PC-3 (cell line): ENCODE measurements at regions of chr3 and their contacts with region 1.

Region 1: DNA sequence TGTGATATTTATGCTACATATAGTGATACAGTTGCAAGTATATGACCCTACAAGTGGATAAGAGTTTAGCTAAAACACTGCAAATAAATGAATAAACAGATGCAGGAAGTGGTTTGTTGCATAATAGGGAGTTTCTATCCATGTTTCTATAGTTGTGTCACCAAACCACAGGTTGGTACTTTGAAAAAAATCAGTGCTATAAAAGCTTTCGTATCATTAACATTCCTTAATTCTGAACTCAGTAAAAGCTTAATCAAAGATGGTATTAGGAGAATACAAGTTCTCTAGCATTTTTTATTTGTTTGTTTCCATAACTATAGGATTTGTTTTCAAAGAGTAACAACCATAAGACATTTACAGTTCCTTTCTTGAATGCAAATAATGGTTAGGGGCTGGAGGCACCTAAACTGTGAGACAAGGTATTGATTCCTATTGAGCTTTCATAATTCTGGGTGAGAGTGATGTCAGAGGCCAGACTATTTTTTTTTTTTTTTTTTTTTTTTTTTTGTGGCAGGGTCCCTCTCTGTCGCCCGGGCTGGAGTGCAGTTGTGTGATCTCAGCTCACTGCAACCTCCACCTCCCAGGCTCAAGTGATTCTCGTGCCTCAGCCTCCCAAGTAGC is 29.6 kb downstream of the CPOX start:
- DNase-seq: peak; percentile 81
- ATAC-seq: peak; percentile 43
- H3K4me3 ChIP-seq: no peak overlapping the region
- H3K27ac ChIP-seq: peak overlapping the region; percentile 62
- H3K4me1 ChIP-seq: peaks cover 50% of the 10 kb centered on the region
- H3K27me3 ChIP-seq: no peaks in the 10 kb centered on the region
- CTCF ChIP-seq: no peak

Region 2: GRCh38 chr3:98522244-98523090 is 41.3 kb before region 1 on chr3 and contains the start of gene CLDND1:
- CTCF ChIA-PET with region 1: no interaction called
- POLR2A ChIA-PET with region 1: interaction called, 7 read pairs
- intact Hi-C with region 1: loop called (anchors 2 kb)
- DNase-seq: peak; percentile 99
- ATAC-seq: peak; percentile 95
- H3K4me3 ChIP-seq: peak within 1 kb of the TSS; percentile 79
- H3K27ac ChIP-seq: peak within 1 kb of the TSS; percentile 91
- H3K4me1 ChIP-seq: peaks cover 21% of the 10 kb centered on the region
- H3K27me3 ChIP-seq: no peaks in the 10 kb centered on the region
- CTCF ChIP-seq: no peak
- total RNA-seq, gene CLDND1: 76.4 and 81.1 TPM in 2 replicates